Activated CD4-positive, alpha-beta T cell treated with anti-CD3 and anti-CD28 coated beads, Interleukin-2, amount 10 ng/mL, durations not matched to agents 7 days and 5 days (primary cell): ENCODE measurements at regions of chr11 and their contacts with region 1.

Region 1: DNA sequence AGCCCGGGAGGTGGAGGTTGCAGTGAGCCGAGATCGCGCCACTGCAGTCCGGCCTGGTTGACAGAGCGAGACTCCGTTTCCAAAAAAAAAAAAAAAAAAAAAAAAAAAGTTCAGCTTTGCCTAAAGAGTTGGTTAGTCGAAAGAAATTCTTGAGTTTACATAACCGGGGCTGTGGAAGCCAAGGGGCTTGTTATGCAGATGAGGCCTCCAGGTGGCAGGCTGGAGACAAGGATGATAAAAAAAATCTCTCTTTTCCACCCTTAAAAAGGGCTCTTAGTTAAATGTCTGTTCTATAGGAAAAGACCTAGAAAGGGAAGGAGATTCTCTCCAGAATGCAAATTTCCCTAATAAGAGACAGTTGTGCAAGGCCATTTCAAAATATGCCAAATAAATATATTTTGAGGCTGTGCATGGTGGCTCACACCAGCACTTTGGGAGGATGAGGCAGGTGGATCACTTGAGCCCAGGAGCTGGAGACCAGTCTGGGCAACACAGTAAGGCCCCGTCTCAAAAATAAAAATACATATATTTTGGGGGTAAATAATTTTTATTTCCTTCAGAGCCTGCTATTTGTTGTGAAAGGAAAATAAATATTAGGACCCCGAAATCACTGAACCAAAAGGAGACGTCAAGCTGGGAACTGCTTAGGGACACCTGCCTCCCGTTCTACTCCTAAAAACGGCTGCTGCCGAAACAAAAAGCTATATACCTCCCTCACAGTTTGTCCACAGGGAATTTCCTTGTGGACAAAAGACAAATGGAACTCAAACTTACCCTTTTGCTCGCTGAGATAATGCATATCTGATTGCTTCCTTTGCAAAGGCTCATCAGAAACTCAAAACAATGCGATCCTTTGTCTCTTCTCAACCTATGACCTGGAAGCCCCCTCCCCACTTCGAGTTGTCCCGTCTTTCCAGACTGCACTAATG is 2.4 kb upstream of the IFITM2 start:
- DNase-seq: peak; percentile 74
- H3K4me3 Mint-ChIP-seq: no peak overlapping the region
- H3K27ac Mint-ChIP-seq: peak overlapping the region; percentile 58
- H3K4me1 Mint-ChIP-seq: peaks cover 42% of the 10 kb centered on the region
- H3K27me3 Mint-ChIP-seq: peaks cover under 1% of the 10 kb centered on the region

Region 2: GRCh38 chr11:279966-280582 is 25.1 kb before region 1 on chr11:
- CTCF ChIA-PET with region 1: interaction called, 15 read pairs
- POLR2A ChIA-PET with region 1: interaction called, 3 read pairs
- DNase-seq: peak; percentile 56
- H3K4me3 Mint-ChIP-seq: peak overlapping the region; percentile 72
- H3K27ac Mint-ChIP-seq: peak overlapping the region; percentile 86
- H3K4me1 Mint-ChIP-seq: peaks cover 54% of the 10 kb centered on the region
- H3K27me3 Mint-ChIP-seq: peaks cover 57% of the 10 kb centered on the region

Region 3: GRCh38 chr11:350723-351255 is 45.6 kb after region 1 on chr11:
- CTCF ChIA-PET with region 1: interaction called, 5 read pairs
- POLR2A ChIA-PET with region 1: interaction called, 11 read pairs
- DNase-seq: no peak
- H3K4me3 Mint-ChIP-seq: no peak overlapping the region
- H3K27ac Mint-ChIP-seq: no peak overlapping the region
- H3K4me1 Mint-ChIP-seq: peaks cover 44% of the 10 kb centered on the region
- H3K27me3 Mint-ChIP-seq: peaks cover 3% of the 10 kb centered on the region